Posterior vena cava (tissue), 2 donors: ENCODE measurements at regions of chr3 and their contacts with region 1.

Region 1: DNA sequence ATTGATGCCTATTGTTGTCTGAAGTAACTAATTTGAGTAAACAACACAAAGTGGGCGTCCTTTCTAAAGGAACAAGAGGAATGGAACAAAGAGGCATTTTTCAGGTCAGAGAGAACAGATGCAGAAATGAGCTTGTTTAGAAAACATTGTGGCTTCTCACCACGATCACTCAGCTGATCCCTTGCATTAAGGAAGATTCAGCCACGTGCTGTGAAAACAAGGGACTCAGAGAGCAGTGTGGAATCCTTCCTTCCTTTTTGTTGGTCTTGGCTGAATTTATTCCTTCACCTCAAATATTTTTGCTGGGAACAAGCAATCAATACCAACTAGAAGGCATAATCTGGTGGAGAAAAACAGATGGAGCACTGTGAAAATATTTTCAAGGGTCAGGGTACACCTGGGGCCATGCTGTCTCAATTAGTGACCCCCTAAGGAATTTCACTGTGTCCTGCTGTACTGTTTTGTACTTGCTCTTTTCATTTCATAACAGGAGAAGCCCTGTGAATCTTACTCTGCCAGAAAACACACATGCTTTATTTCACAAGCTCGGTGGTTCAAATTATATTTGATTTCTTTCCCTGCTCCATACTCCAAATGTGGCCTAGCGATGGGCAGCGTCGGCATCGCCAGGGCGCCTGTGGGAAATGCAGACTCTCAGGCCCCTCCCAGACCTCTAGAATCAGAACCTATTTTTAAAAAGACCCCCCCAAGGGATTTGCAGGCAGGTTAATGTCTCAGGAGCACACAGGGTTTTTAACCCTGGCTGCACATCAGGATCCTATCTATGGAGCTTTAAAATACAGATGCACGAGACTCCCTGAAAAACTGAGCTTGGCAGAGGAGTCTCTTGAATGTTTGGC is 11.6 kb upstream of the SLC6A20 start:
- DNase-seq: no peak

Region 2: DNA sequence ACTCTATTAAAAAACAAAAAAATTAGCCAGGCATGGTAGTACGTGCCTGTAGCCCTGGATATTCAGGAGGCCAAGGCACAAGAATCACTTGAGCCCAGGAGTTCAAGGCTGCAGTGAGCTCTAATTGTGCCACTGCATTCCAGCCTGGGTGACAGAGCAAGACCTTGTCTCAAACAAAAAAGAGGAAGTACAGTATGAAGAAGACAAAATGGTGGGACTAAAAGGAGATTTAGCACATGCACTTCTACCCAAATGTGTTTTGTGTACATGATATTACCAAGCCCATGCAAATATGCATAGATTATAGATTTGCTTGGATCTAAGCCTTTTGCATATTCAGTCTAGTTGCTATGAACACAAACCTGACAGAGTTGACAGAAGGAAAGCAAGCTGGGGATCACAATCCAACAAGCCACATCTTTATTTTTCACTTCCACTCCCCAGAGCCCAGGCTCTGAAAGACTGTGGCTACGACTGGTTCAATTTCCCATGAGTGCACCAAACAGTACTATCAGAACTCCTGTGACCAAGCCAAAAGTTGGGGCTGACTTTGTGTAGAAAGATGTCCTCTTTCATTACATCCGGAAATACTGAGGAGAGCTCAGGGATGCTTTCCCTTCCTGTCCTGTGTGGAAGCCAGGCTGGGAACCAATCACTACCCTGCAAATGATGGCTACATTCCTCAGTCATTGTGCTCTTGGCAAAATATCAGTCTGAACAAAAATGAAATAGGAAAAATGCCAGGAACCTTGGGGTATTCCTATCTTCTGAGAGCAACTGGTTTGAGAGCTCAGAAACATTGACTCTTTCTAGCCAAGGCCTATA is 884.1 kb before region 1 on chr3:
- intact Hi-C with region 1: loop called in 1 of 2 experiments (anchors 10 kb)
- DNase-seq: no peak

Region 3: DNA sequence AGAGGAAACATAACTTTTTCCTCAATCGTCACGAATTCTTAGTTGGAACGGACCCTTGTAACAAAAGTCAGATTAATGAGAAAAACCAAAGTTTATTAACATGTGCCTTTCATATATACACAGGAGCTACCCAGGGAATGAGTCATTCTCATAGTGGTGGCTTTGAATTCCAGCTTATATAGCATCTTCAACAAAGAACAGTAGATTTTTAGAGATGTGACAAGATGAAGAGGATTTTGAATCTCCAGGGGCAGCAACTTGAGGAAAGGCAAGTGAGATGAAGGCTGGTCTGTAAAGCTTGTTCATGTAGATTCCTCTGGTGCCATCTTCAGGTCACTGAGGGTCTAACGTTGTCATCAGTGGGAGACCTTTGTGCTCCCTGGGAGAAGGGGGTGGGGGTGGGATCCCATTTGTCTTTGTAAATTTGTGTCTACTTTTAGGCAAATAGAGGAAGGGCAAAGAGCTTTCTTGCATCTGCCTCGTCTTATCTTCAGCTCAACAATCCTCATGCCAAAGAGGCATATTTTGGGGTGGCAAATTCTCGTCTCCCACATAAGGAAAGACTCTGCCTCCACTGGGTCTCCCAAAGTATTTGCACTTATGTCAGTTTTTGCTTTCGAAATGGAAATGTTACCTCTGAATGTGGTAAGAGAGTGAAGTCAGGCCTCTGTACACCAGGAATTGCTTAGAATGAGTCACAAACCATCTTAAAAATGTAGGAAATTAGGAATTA is 752.3 kb before region 1 on chr3:
- intact Hi-C with region 1: no loop called
- DNase-seq: no peak

Region 4: GRCh38 chr3:45677033-45677433 is 130.9 kb before region 1 on chr3:
- intact Hi-C with region 1: no loop called
- DNase-seq: no peak